PC-3 (cell line): ENCODE measurements at regions of chr19 and their contacts with region 1.

Region 1: GRCh38 chr19:3984908-3985642 is at the start of gene EEF2:
- DNase-seq: peak; percentile 87
- ATAC-seq: peak; percentile 25
- H3K4me3 ChIP-seq: peak within 1 kb of the TSS; percentile 97
- H3K27ac ChIP-seq: peak within 1 kb of the TSS; percentile 49
- H3K4me1 ChIP-seq: peaks cover 20% of the 10 kb centered on the region
- H3K27me3 ChIP-seq: no peaks in the 10 kb centered on the region
- CTCF ChIP-seq: no peak
- total RNA-seq, gene EEF2: 1,124 and 1,170 TPM in 2 replicates

Region 2: GRCh38 chr19:3970808-3971598 is 14.1 kb before region 1 on chr19 and contains the start of gene DAPK3:
- CTCF ChIA-PET with region 1: no interaction called
- POLR2A ChIA-PET with region 1: interaction called, 6 read pairs
- intact Hi-C with region 1: loop called (anchors 2 kb)
- DNase-seq: peak; percentile 95
- ATAC-seq: peak; percentile 76
- H3K4me3 ChIP-seq: peak within 1 kb of the TSS; percentile 90
- H3K27ac ChIP-seq: peak within 1 kb of the TSS; percentile 93
- H3K4me1 ChIP-seq: peaks cover 15% of the 10 kb centered on the region
- H3K27me3 ChIP-seq: no peaks in the 10 kb centered on the region
- CTCF ChIP-seq: no peak
- total RNA-seq, gene DAPK3: 94.2 and 155 TPM in 2 replicates

Region 3: GRCh38 chr19:4007021-4007835 is 22.2 kb after region 1 on chr19 and contains the start of gene PIAS4:
- CTCF ChIA-PET with region 1: no interaction called
- POLR2A ChIA-PET with region 1: no interaction called
- intact Hi-C with region 1: no loop called
- DNase-seq: peak; percentile 92
- ATAC-seq: peak; percentile 94
- H3K4me3 ChIP-seq: peak within 1 kb of the TSS; percentile 98
- H3K27ac ChIP-seq: peak within 1 kb of the TSS; percentile 37; the same call in 1 of the 2 replicates
- H3K4me1 ChIP-seq: peaks cover 5% of the 10 kb centered on the region; the same call in 1 of the 2 replicates
- H3K27me3 ChIP-seq: no peaks in the 10 kb centered on the region
- CTCF ChIP-seq: no peak
- total RNA-seq, gene PIAS4: 21.0 and 26.5 TPM in 2 replicates

Region 4: DNA sequence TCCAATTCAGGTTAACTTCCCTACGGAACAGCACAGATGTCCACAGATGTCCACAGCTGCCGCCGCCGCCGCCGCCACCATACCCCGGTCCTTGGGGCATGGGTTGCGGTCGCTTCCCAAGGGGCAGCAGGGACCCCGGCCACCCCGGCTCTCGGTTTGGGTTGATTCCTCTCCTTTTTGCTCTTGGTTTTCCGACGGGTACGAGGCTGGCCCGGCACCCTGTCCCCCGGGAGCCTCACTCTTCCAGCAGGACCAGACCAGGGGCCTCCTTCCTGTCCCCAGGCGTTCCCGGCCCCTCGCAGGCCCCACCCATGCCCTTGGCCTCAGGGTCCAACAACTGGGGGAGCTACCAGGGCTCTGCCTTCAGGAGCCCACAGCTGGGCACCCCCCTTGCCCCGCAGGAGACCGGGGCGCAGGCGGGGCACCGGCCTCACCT is 53.6 kb after region 1 on chr19:
- CTCF ChIA-PET with region 1: interaction called, 15 read pairs
- POLR2A ChIA-PET with region 1: no interaction called
- intact Hi-C with region 1: no loop called
- DNase-seq: no peak
- ATAC-seq: no peak
- H3K4me3 ChIP-seq: no peak overlapping the region
- H3K27ac ChIP-seq: no peak overlapping the region
- H3K4me1 ChIP-seq: 0 out of 2 replicates have a peak, but pooled peaks cover 3% of the 10 kb centered on the region
- H3K27me3 ChIP-seq: no peaks in the 10 kb centered on the region
- CTCF ChIP-seq: no peak

Region 5: GRCh38 chr19:4208385-4209094 is 223.5 kb after region 1 on chr19:
- CTCF ChIA-PET with region 1: interaction called, 15 read pairs
- POLR2A ChIA-PET with region 1: no interaction called
- intact Hi-C with region 1: loop called (anchors 5 kb)
- DNase-seq: peak; percentile 50
- ATAC-seq: peak; percentile 30; the same call in 1 of the 2 replicates
- H3K4me3 ChIP-seq: no peak overlapping the region
- H3K27ac ChIP-seq: no peak overlapping the region
- H3K4me1 ChIP-seq: peaks cover 7% of the 10 kb centered on the region; the same call in 1 of the 2 replicates
- H3K27me3 ChIP-seq: no peaks in the 10 kb centered on the region
- CTCF ChIP-seq: peak; percentile 36; the same call in 1 of the 2 replicates

Region 6: DNA sequence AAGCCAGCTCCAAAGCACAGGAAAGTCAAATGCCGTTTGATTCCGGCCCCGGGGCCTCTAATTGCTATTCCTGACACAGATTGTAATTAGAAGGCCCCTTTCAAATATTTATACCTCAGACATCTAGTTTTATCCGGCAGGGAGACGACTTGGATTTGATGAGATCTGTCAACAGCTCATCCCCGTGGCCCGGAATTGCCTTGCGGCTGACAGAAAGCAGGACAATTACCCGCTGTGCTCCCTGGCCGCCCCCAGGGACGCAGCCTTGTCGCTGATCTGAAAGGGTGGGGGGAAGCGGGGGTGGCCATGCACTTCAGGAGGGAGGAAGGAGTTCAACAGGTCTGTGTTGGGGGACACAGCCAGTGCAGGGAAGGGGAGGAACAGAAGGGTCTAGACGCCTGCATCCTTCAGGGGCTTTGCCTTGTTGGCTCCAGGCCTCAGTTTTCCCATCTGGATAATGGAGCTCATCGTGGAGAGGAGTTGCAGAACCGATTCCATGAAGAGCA is 292.2 kb after region 1 on chr19:
- CTCF ChIA-PET with region 1: interaction called, 21 read pairs
- POLR2A ChIA-PET with region 1: no interaction called
- intact Hi-C with region 1: no loop called
- DNase-seq: no peak
- ATAC-seq: no peak
- H3K4me3 ChIP-seq: no peak overlapping the region
- H3K27ac ChIP-seq: no peak overlapping the region
- H3K4me1 ChIP-seq: no peaks in the 10 kb centered on the region
- H3K27me3 ChIP-seq: peaks cover 9% of the 10 kb centered on the region
- CTCF ChIP-seq: no peak